ENCODE measurements at regions of chr20 and their contacts with region 1.

Region 1: DNA sequence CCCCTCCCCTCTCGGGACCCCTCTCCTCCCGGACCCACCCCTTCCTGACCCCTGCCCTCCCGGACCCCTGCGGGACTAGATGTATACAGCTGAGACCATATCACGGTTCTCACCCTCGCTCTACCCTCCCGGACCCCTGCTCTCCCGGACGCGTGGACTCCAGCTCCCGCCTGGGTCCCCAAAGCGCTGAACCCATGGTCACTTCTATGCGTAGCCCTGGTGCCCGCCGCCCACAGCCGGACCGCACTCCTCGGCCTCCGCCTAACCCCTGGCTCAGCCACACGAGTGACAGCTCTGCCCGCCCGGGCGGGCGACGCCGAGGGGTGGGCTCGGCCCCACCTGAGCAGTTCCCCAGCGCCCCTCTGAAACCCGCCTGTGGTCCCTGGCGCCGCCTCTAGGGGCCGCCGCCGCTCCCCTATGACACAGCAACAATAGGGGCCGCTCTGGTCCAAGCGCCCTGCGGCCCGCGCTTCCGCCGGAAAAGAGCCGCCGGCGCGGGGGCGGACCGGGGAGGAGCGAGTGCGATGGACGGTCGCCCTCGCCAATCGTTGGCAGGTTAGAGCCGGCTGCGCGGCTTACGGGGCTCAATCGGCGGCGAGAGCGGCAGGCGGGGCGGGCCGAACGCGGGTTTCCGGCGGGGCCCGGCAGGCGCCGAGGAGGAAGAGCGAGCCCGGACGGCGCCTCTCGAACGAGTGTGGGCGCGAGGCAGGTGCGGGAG is at the start of gene ADRM1:
- DNase-seq: peak; percentile 96 to 99 (median 98)
- ATAC-seq: peak; percentile 91 to 94
- H3K4me3 ChIP-seq: peak within 1 kb of the TSS; percentile 87
- H3K27ac ChIP-seq: peak within 1 kb of the TSS; percentile 96
- H3K4me1 ChIP-seq: peaks cover 7% of the 10 kb centered on the region
- H3K27me3 ChIP-seq: no peaks in the 10 kb centered on the region
- total RNA-seq, gene ADRM1: 65.0 to 80.9 (median 73.4) TPM

Region 2: GRCh38 chr20:62376112-62377063 is 73.9 kb after region 1 on chr20:
- intact Hi-C with region 1: loop called in 2 of 4 experiments (anchors 5 kb)
- DNase-seq: peak; percentile 55 to 85 (median 84)
- ATAC-seq: peak; percentile 50 to 73
- H3K4me3 ChIP-seq: no peak overlapping the region
- H3K27ac ChIP-seq: peak overlapping the region; percentile 45
- H3K4me1 ChIP-seq: no peaks in the 10 kb centered on the region
- H3K27me3 ChIP-seq: no peaks in the 10 kb centered on the region

Region 3: GRCh38 chr20:62449951-62450691 is 147.6 kb after region 1 on chr20:
- intact Hi-C with region 1: no loop called
- DNase-seq: peak in 1 of 3 donors; percentile 68
- ATAC-seq: peak; percentile 7 to 34
- H3K4me3 ChIP-seq: no peak overlapping the region
- H3K27ac ChIP-seq: no peak overlapping the region
- H3K4me1 ChIP-seq: no peaks in the 10 kb centered on the region
- H3K27me3 ChIP-seq: no peaks in the 10 kb centered on the region

Measured in right cardiac atrium (tissue), 5 donors.